AG04449 (cell line): ENCODE measurements at regions of chr19 and their contacts with region 1.

Region 1: DNA sequence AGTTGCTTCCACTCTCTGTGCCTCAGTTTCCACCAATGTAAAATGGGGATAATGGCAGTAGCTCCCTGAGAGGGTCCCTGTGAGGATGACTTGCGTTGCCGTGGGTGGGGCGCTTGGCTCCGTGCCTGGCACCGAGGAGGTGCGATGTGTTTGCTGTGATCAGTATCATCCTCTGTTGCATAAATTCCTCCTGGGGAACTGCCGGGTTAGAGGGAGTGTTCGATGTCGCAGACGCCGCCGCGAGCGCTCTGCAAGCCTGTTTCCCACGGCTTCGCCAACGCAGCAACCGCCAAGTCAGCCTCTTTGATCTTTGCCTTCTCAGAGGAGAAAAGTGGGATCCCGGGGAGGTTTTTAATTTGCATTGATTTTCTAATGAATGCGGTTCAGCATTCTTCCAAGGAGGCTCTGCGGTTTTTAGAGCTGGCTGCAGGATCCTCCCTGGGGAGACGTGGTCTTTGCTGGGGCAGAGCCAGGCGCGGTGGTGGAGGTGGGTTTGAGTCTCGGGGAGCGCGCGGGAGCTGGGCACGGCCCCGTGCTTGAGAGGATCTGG is 7.6 kb downstream of the GPR32 start:
- DNase-seq: no peak
- H3K4me3 ChIP-seq: no peak overlapping the region
- CTCF ChIP-seq: no peak

Region 2: GRCh38 chr19:50537762-50538230 is 240.0 kb before region 1 on chr19:
- CTCF ChIA-PET with region 1: interaction called, 148 read pairs
- POLR2A ChIA-PET with region 1: no interaction called
- DNase-seq: peak; percentile 28
- H3K4me3 ChIP-seq: no peak overlapping the region
- CTCF ChIP-seq: peak; percentile 93

Region 3: DNA sequence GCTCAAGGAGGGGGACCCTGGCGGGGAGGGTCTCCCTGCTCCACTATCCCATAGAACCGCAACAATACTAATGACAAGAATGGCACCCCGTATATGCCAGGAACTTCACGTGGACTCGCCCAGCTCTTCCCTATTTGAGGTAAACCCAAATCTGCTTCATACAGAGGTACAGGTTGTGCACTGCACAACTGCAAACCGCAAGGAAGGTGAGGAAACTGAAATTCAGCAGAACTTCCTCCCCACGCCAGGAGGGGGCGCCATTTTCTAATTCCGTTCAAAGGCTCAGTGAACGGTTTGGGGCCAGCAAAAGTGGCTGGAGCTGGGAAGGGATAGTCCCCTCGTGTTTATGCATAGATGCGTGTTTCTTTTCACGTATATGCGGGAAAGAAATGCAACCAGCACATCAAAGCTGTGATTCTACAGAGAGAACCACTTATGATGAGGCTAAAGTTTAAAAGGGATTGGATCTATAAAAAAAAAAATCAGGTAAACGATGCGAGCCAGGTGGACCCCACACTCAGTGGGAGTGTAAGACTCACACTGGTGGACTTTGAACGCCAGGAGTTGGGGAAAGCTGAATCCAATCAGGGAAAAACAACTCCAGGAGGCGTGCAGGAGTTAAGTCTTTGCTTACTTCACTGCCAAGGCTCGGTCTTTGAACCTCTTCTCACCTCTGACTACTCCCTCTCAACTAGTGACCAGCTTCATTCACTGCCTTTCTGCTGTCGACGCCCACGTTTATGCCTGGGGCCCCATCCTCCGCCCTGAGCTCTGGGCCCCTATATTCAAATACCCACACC is 108.3 kb before region 1 on chr19:
- CTCF ChIA-PET with region 1: interaction called, 58 read pairs
- POLR2A ChIA-PET with region 1: no interaction called
- DNase-seq: no peak
- H3K4me3 ChIP-seq: no peak overlapping the region
- CTCF ChIP-seq: peak; percentile 83

Region 4: DNA sequence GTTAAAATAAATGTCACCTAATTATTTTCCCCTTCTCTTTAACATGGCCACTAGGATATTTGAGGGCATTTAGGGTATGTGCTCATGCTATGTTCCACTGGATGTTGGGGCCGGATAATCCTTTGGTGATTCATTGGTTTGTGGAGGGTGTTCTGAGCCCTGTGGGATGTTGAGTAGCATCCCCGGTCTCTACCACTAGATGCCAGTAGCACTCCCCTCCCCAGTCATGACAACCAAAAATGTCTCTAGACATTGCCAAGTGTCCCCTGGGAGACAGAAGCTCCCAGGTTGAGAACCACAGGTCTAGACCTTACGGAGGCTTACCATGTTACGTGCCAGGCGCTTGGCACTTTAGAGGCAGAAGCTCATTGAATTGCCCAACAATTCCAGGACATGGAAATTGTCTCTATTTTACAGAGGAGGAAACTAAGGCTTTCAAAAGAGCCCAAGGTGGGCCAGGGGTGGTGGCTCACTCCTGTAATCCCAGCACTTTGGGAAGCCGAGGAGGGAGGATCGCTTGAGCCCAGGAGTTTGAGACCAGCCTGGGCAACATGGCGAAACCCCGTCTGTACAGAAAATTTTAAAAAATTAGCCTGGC is 72.3 kb before region 1 on chr19:
- CTCF ChIA-PET with region 1: interaction called, 75 read pairs
- POLR2A ChIA-PET with region 1: no interaction called
- DNase-seq: no peak
- H3K4me3 ChIP-seq: no peak overlapping the region
- CTCF ChIP-seq: peak; percentile 84

Region 5: GRCh38 chr19:50724522-50725217 is 53.2 kb before region 1 on chr19:
- CTCF ChIA-PET with region 1: interaction called, 18 read pairs
- POLR2A ChIA-PET with region 1: no interaction called
- DNase-seq: peak; percentile 95
- H3K4me3 ChIP-seq: peak overlapping the region; percentile 92
- CTCF ChIP-seq: peak; percentile 92

Region 6: GRCh38 chr19:50794439-50795237 is 16.8 kb after region 1 on chr19:
- CTCF ChIA-PET with region 1: interaction called, 31 read pairs
- POLR2A ChIA-PET with region 1: interaction called, 3 read pairs
- DNase-seq: no peak
- H3K4me3 ChIP-seq: no peak overlapping the region
- CTCF ChIP-seq: no peak

Region 7: GRCh38 chr19:50830266-50831025 is 52.6 kb after region 1 on chr19:
- CTCF ChIA-PET with region 1: no interaction called
- POLR2A ChIA-PET with region 1: no interaction called
- DNase-seq: no peak
- H3K4me3 ChIP-seq: no peak overlapping the region
- CTCF ChIP-seq: no peak